Left cardiac atrium (tissue), 4 donors: ENCODE measurements at regions of chr2 and their contacts with region 1.

Region 1: GRCh38 chr2:224778474-224778877 is 62.3 kb upstream of the CCDC195 start:
- DNase-seq: no peak
- ATAC-seq: no peak

Region 2: GRCh38 chr2:223993621-223994232 is 784.7 kb before region 1 on chr2:
- intact Hi-C with region 1: loop called in 1 of 2 experiments (anchors 5 kb)
- DNase-seq: peak; percentile 60
- ATAC-seq: peak; percentile 62 to 74

Region 3: DNA sequence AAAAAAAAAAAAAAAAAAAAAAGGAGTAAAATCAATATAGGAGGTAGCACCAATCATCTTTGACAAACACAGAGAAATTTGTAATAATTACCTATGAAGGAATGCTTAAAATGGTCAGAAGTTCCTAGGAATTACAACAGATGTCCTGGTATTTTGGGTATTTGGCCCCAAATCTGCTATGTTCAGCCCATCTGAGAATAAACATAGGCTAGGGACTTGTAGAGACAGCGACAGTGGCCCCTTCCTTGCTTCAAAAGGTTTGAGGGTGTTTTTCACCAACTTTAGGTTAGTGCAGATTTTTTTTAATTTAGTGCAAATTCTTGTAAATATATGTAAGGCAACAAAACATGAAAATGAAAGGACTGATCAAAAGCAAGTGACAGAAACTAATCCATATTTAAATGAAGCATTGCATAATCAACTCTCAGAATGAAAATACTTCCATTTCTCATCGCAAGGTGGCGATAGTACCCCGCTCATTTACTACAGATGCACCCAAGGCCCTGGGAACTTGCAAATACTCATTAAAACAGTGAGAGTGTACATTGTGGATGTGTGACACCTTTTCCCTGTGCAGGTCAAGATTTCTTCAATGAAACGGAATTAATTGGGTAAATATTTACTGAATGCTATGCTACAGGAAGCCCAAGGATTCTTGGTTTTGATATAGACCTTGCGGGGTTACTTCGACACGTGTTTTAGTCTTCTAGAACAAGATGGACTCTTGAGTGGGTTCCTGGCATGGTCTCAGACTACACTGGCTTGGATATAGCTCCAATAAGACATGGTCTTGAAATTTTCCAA is 421.2 kb before region 1 on chr2:
- intact Hi-C with region 1: loop called (anchors 2 to 5 kb)
- DNase-seq: no peak
- ATAC-seq: peak; percentile 70 to 72

Region 4: DNA sequence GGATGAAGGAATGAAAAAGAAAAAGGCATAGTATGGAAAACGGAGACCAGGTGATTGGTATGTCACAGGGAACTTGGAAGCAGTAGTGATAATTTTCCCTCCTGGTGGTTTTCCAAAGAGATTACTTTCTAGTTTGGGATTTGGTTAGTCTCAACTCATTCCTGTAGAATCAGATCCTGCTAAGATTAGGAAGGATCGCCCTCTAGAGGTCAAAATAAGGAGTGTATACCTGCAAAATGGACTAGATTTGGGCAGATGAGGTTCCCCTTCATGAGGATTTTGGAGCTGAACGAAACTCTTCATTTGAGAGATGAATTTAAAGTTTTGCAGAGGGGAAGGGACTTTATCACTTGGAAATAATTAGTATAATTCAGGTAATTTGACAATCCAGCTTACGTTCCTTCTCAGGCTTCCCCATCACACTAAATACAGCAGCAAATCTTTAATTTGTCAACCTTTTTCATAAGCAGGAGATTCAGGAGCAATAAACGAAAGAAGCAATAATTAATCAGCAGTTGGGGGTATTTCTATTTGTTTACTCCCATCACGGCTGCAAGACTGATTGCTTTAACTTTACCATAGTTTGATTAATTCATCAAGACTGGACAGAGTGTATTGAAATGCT is 127.5 kb before region 1 on chr2:
- intact Hi-C with region 1: loop called in 1 of 2 experiments (anchors 5 kb)
- DNase-seq: no peak
- ATAC-seq: peak; percentile 62 to 78

Region 5: GRCh38 chr2:224909885-224910573 is 131.6 kb after region 1 on chr2:
- intact Hi-C with region 1: no loop called
- DNase-seq: peak; percentile 49
- ATAC-seq: peak; percentile 88 to 96

Region 6: GRCh38 chr2:225233233-225233632 is 454.8 kb after region 1 on chr2:
- intact Hi-C with region 1: no loop called
- DNase-seq: no peak
- ATAC-seq: no peak